ENCODE measurements at regions of chr13 and their contacts with region 1.

Region 1: GRCh38 chr13:110116072-110116487 is 190.9 kb downstream of the COL4A1 start:
- DNase-seq: peak; percentile 82
- ATAC-seq: peak; percentile 97
- H3K4me3 Mint-ChIP-seq: no peak overlapping the region
- H3K27ac Mint-ChIP-seq: no peak overlapping the region
- H3K4me1 Mint-ChIP-seq: peaks cover 6% of the 10 kb centered on the region
- H3K27me3 Mint-ChIP-seq: peaks cover 14% of the 10 kb centered on the region
- CTCF ChIP-seq: peak; percentile 85

Region 2: DNA sequence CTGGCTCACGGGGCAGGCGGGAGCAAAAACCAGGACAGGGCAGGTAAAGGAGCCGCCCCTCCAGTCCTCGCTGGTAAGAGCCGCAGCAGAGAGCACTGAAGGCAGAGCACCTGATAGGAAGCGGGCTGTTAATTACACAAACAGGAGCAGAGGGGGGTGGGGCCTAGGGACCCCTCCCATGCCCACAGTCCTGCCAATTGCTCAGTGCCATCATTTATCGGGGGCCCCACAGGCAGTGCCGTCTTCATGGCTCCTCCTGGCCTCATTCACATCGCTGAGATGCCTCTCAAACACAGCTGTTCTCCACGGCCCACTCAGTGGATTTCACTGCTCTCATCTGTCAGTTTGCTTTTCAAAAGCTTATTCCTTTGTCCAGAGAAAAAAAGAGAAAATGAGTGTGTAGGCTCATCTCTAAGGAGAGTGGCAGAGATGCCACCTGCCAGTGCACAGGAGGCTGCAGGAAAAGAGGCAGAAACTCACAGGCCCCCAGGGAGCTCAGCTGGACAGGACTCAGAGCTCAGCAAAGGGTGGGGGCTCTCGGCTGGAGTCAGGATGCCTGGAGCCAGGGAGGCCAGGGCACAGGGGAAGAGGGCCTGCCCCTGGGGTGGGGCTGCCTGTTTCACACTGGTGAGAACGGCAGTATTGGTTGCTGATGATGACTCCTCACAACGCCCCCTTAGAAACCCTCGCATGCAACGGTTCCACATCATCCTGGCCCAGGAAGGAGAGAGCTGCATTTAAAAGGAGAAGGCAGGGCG is 16.3 kb after region 1 on chr13:
- CTCF ChIA-PET with region 1: interaction called, 14 read pairs
- POLR2A ChIA-PET with region 1: no interaction called
- DNase-seq: no peak
- ATAC-seq: peak; percentile 34
- H3K4me3 Mint-ChIP-seq: no peak overlapping the region
- H3K27ac Mint-ChIP-seq: no peak overlapping the region
- H3K4me1 Mint-ChIP-seq: peaks cover 50% of the 10 kb centered on the region
- H3K27me3 Mint-ChIP-seq: peaks cover 15% of the 10 kb centered on the region
- CTCF ChIP-seq: no peak

Region 3: GRCh38 chr13:110168999-110169933 is 53.2 kb after region 1 on chr13:
- CTCF ChIA-PET with region 1: no interaction called
- POLR2A ChIA-PET with region 1: no interaction called
- DNase-seq: no peak
- ATAC-seq: no peak
- H3K4me3 Mint-ChIP-seq: no peak overlapping the region
- H3K27ac Mint-ChIP-seq: no peak overlapping the region
- H3K4me1 Mint-ChIP-seq: peaks cover 4% of the 10 kb centered on the region; the same call in 1 of the 2 replicates
- H3K27me3 Mint-ChIP-seq: no peaks in the 10 kb centered on the region
- CTCF ChIP-seq: no peak

Region 4: DNA sequence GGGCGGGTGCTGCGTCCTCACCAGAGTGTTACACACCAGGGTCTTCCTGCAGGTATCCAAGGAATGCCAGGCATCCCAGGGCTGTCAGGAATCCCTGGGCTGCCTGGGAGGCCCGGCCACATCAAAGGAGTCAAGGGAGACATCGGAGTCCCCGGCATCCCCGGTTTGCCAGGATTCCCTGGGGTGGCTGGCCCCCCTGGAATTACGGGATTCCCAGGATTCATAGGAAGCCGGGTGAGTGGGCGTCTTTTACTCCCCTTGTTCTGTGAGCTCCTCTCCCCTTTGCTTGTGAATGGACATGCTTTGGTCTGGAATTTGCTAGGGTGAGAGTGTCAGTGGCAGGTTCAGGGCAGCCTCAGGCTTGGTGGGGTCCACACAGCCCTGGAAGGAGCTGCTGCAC is 369.5 kb after region 1 on chr13:
- CTCF ChIA-PET with region 1: no interaction called
- POLR2A ChIA-PET with region 1: no interaction called
- DNase-seq: peak; percentile 86
- ATAC-seq: peak; percentile 89
- H3K4me3 Mint-ChIP-seq: no peak overlapping the region
- H3K27ac Mint-ChIP-seq: peak overlapping the region; percentile 99
- H3K4me1 Mint-ChIP-seq: peaks cover 34% of the 10 kb centered on the region
- H3K27me3 Mint-ChIP-seq: no peaks in the 10 kb centered on the region
- CTCF ChIP-seq: no peak